Activated T-helper 1 cell treated with anti-CD3 and anti-CD28 coated beads, Interleukin-12 subunit alpha, Interleukin-12 subunit beta, Interleukin-2, Interleukin-4 antibody, amounts not matched to agents 30 ng/mL and 10 ng/mL and 1 ng/mL, durations not matched to agents 14 hours and 24 hours and 36 hours (primary cell): ENCODE measurements at regions of chr4 and their contacts with region 1.

Region 1: DNA sequence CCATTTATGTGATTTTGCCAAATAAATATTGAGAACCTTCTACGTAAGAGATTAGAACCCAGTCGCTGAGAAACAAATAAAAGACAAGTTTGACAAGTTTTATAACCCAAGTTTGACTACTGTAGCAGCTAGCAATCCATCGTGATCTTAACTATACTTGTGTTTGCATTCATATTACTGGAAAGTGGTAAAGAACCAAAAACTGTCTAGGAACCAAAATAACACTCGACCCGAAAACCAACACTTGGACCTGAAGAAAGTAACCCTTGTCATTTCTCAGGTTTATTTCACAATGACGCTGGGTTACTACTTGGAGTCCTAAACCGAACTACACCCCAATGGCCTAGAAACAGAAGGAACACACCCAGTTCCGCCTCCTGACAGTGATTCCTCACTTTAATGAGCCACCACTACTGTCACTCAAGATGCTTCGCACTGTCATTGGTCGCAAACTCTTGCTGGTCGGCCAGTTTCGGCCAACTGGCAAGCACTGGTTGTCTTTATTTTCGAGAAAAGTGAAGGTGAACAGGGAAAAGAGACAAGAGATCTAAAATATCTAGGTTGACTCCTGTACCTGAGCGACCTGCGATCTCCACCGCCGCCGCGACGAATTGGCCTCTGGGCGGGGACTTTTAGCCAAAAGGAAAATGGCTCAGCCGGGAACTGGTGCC is 496 bp downstream of the FBXO8 start:
- DNase-seq: peak; percentile 79
- H3K4me3 Mint-ChIP-seq: peak overlapping the region; percentile 100
- H3K27ac Mint-ChIP-seq: peak overlapping the region; percentile 99
- H3K4me1 Mint-ChIP-seq: peaks cover 73% of the 10 kb centered on the region
- H3K27me3 Mint-ChIP-seq: no peaks in the 10 kb centered on the region

Region 2: DNA sequence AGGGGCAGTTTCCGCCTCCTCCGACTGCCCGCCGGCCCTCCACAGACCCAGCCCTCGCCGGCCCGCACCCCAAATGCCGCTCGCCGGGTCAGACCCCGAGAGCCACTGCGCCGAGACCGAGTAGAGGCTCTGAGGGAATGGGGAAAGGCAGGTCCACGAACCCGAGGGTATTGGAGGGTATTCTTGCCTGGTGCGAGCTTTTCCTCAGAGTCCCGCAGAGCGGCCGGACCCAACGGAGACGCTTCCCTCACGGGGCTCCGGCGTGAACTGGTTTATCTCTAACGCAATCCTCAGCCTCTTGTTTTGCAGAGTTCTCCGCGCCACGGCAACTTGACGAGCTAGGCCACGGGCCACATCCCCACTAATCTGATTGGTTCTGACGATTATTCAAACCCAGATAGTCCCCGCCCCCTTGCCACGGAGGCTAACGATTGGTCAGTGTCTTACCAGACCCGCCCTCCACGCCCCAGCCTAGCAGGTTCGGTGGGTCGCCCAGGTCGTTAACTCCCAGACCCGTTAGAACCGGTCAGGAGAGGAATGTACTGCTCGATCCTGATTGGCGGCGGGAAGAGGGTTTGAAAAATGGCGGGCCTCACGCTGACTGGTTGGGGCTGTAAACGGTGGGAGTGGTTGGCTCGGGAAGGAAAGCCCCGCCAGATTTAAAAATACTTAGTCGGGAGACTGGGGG is 948.7 kb before region 1 on chr4 and contains the start of gene HMGB2:
- intact Hi-C with region 1: loop called (anchors 2 kb)
- DNase-seq: peak; percentile 99
- H3K4me3 Mint-ChIP-seq: peak within 1 kb of the TSS; percentile 98
- H3K27ac Mint-ChIP-seq: peak within 1 kb of the TSS; percentile 99
- H3K4me1 Mint-ChIP-seq: peaks cover 56% of the 10 kb centered on the region
- H3K27me3 Mint-ChIP-seq: no peaks in the 10 kb centered on the region
- total RNA-seq, gene HMGB2: 274 and 292 TPM in 2 replicates

Region 3: DNA sequence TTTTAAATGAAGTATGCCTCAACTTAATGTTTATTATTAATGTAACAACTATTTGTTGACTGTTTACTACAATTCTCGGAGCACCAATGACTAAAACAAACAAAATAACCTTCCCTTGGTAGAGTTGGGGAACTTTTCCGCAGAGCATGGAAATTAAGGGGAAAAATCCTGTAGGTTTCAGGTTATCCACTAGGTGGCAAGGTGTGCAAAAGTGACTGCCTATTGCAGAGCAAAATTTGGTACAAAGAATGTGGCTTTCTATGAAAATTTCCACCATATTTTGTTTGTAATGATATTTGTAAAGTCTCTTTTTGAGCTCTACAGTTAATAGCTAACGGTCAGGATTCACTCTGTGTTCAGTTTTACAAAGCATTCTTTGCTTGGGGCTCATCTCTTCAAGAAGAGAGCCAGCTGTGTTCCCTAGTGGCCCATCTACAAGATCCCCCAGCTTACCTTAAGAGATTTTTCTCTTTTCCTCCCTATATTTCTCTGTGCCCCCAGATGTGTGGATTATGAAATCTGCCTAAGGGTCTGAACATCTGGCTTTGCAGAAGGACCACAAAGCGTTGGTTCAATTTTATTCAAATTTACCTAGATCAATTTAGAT is 60.6 kb before region 1 on chr4:
- intact Hi-C with region 1: loop called (anchors 2 kb)
- DNase-seq: no peak
- H3K4me3 Mint-ChIP-seq: no peak overlapping the region
- H3K27ac Mint-ChIP-seq: no peak overlapping the region
- H3K4me1 Mint-ChIP-seq: peaks cover 11% of the 10 kb centered on the region
- H3K27me3 Mint-ChIP-seq: peaks cover 56% of the 10 kb centered on the region

Region 4: DNA sequence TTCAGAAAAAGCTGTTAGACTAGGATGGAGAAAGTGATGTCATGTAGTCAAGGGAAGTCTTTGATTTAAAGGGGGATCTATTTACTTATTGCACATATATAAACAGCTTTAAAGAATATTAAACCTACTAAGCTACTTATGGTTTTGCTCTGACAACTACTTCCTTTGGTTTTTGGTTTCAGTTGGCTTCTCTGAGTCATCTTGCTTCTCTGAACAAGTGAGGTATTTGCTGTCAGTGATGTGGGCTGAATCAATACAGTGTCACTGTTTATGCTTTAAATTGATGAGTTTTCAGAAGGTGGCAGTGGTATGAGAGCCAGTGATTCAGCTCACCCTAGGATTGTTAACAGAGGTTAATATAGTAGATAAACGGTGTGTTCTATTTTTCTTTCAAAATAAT is 75.9 kb after region 1 on chr4:
- intact Hi-C with region 1: loop called (anchors 1 kb)
- DNase-seq: peak; percentile 22
- H3K4me3 Mint-ChIP-seq: no peak overlapping the region
- H3K27ac Mint-ChIP-seq: peak overlapping the region; percentile 84
- H3K4me1 Mint-ChIP-seq: peaks cover 26% of the 10 kb centered on the region
- H3K27me3 Mint-ChIP-seq: peaks cover 13% of the 10 kb centered on the region

Region 5: DNA sequence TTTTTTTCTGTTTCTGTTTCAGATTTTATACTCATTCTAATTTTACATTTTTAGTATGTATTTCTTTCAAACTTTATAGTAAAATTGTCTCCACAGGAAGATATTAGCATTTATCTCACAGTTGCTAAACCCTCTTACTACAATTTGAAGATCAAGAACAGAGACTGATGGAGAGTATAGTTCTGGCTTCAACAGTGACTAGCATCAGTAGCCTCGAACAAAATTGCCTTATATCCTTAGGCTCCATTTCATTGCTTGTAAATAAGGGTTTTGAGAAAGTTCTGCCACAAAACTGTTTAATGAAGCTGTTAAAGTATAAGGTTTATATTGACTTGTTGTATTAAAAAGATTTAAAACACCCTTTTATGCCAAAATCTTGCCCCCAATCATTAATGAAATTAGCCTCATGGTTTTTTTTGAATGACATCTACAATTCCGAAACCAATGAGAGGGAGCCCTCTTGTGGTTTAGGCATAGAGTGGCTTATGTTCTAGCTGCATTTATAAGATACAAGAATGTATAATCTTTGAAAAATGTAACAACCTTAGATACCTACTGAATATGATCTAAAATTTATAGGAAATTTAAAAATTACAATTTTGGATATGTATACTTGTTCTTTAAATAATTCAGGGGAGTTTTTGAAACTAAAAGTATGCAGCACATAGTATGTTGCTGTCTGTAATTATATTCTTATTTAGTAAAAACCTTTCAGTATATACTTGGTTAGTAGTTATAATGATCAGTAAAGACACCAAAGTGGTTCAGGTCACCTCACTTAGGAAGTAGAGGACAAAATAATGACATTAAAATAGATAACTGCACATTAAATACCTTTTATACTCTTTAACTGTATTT is 349.2 kb after region 1 on chr4:
- intact Hi-C with region 1: loop called (anchors 5 kb)
- DNase-seq: no peak
- H3K4me3 Mint-ChIP-seq: no peak overlapping the region
- H3K27ac Mint-ChIP-seq: no peak overlapping the region
- H3K4me1 Mint-ChIP-seq: peaks cover 6% of the 10 kb centered on the region
- H3K27me3 Mint-ChIP-seq: peaks cover 2% of the 10 kb centered on the region

Region 6: DNA sequence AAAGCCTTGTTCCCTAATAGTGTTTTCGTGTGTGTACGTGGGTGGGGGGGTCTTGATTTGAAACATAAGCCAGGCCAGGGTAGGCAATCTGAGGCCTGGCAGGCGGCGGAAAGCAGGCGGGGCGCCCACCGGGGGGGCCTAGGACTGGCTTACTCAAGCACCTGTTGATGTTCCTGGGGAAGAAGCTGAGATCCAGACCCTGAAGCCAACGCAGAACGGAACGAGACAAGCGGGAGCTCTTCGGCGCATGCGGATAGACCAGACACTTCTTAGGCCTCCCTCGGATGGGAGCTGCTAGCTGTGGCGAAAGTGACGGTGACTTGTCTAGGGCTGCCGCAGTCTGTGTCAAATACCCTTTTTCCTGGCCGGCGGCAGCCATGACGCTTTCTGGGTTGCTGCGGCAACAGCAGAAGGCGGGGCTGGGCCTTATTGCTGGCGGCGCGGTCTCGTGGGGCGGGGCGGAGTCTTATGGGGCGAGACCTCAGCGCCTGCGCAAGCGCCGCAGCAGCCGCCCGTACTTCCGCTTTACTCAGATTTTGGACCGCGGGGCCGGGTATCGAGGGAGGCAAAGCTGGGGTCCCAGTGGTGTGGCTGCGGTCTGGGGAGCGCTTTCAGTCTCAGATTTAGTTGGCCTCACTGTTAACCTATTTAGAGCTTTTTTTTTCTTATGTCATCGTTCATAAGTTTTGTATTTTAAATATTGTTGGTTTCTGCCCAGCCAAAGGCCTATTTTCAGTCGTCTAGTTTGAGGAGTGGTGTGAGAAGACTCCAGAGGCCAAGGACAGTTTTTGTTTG is 1912.4 kb after region 1 on chr4 and contains the start of gene SPATA4:
- intact Hi-C with region 1: loop called (anchors 5 kb)
- DNase-seq: peak; percentile 88
- H3K4me3 Mint-ChIP-seq: peak within 1 kb of the TSS; percentile 70
- H3K27ac Mint-ChIP-seq: peak within 1 kb of the TSS; percentile 72
- H3K4me1 Mint-ChIP-seq: peaks cover 22% of the 10 kb centered on the region
- H3K27me3 Mint-ChIP-seq: peaks cover 33% of the 10 kb centered on the region
- total RNA-seq, gene SPATA4: not detected in 2 replicates